AG04449 (cell line): ENCODE measurements at regions of chr6 and their contacts with region 1.

Region 1: DNA sequence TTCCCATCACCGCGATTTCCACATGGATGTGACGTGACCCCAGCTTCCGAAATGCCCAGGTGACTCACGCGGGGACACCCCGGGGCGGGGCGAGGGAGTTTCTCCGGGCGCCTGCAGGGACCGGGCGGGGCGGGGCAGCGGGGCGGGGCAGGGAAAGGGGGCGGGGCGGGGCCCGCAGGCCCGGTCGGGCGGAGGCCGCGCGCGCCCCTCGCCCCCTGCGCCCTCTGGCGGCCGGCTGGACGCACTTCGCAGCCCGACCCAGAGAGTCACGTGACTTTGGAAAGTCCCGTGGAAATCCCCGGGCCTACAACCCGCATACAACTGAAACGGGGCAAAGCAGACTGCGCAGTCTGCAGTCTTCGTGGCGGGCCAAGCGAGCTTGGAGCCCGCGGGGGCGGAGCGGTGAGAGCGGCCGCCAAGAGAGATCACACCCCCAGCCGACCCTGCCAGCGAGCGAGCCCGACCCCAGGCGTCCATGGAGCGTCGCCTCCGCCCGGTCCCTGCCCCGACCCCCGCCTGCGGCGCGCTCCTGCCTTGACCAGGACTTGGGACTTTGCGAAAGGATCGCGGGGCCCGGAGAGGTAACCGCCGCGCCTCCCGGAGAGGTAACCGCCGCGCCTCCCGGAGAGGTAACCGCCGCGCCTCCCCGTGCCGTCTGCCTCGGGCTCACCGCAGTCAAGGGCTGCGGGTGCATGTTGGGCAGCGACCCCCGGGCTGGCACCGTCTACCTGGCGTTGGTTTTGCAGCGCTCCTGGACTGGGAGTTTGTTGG is at the start of gene TNFAIP3:
- DNase-seq: no peak
- H3K4me3 ChIP-seq: peak within 1 kb of the TSS; percentile 92
- CTCF ChIP-seq: peak; percentile 77

Region 2: GRCh38 chr6:137697267-137697938 is 169.7 kb before region 1 on chr6:
- CTCF ChIA-PET with region 1: interaction called, 33 read pairs
- POLR2A ChIA-PET with region 1: no interaction called
- DNase-seq: peak; percentile 12
- H3K4me3 ChIP-seq: no peak overlapping the region
- CTCF ChIP-seq: no peak

Region 3: GRCh38 chr6:137717074-137718073 is 149.7 kb before region 1 on chr6:
- CTCF ChIA-PET with region 1: interaction called, 17 read pairs
- POLR2A ChIA-PET with region 1: no interaction called
- DNase-seq: no peak
- H3K4me3 ChIP-seq: no peak overlapping the region
- CTCF ChIP-seq: no peak

Region 4: GRCh38 chr6:137811121-137811915 is 55.8 kb before region 1 on chr6:
- CTCF ChIA-PET with region 1: no interaction called
- POLR2A ChIA-PET with region 1: no interaction called
- DNase-seq: peak; percentile 64
- H3K4me3 ChIP-seq: no peak overlapping the region
- CTCF ChIP-seq: no peak

Region 5: GRCh38 chr6:137849181-137849980 is 17.7 kb before region 1 on chr6:
- CTCF ChIA-PET with region 1: interaction called, 11 read pairs
- POLR2A ChIA-PET with region 1: no interaction called
- DNase-seq: no peak
- H3K4me3 ChIP-seq: no peak overlapping the region
- CTCF ChIP-seq: no peak

Region 6: GRCh38 chr6:137878486-137879285 is 11.6 kb after region 1 on chr6:
- CTCF ChIA-PET with region 1: interaction called, 67 read pairs
- POLR2A ChIA-PET with region 1: interaction called, 3 read pairs
- DNase-seq: no peak
- H3K4me3 ChIP-seq: no peak overlapping the region
- CTCF ChIP-seq: no peak

Region 7: GRCh38 chr6:137927777-137928218 is 60.7 kb after region 1 on chr6:
- CTCF ChIA-PET with region 1: interaction called, 262 read pairs
- POLR2A ChIA-PET with region 1: interaction called, 3 read pairs
- DNase-seq: no peak
- H3K4me3 ChIP-seq: no peak overlapping the region
- CTCF ChIP-seq: no peak

Region 8: DNA sequence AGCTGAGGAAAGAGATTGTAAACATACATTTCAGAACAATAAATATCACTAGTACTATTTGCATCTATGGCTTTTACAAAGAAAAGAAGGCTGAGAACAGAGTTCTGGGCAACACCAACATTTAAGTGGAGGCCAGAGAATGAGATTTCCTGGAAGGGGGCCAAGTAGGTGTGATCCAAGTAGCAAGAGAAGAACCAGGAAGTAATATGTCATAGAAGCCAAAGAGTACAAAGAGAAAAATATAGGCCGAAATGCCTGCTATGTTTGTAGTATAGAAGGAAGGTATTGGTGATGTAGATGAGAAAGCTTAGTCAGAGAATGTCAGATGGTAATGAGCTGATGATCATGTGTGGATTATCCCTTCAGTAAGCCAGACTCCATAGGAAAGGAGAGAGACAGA is 145.6 kb after region 1 on chr6:
- CTCF ChIA-PET with region 1: no interaction called
- POLR2A ChIA-PET with region 1: no interaction called
- DNase-seq: no peak
- H3K4me3 ChIP-seq: no peak overlapping the region
- CTCF ChIP-seq: no peak